HCT116 (cell line): ENCODE measurements at regions of chr9 and their contacts with region 1.

Region 1: GRCh38 chr9:136784249-136784996 is 6.7 kb upstream of the TMEM141 start:
- DNase-seq: peak; percentile 52
- ATAC-seq: peak; percentile 68
- H3K4me3 ChIP-seq: no peak overlapping the region
- H3K27ac ChIP-seq: no peak overlapping the region
- H3K4me1 ChIP-seq: peaks cover 4 to 18% of the 10 kb centered on the region in 2 experiments; a peak in 3 of 4 replicates
- H3K27me3 ChIP-seq: no peaks in the 10 kb centered on the region
- CTCF ChIP-seq: peak in 2 of 3 experiments; percentile 26 to 51; a peak in 3 of 6 replicates
- POLR2A ChIP-seq: no peak
- RAD21 ChIP-seq: no peak

Region 2: GRCh38 chr9:136757751-136758140 is 26.7 kb before region 1 on chr9:
- CTCF ChIA-PET with region 1: interaction called, 3 read pairs
- POLR2A ChIA-PET with region 1: no interaction called
- RAD21 ChIA-PET with region 1: no interaction called
- intact Hi-C with region 1: loop called (anchors 1 kb)
- DNase-seq: no peak
- ATAC-seq: no peak
- H3K4me3 ChIP-seq: no peak overlapping the region
- H3K27ac ChIP-seq: no peak overlapping the region
- H3K4me1 ChIP-seq: peaks cover 10 to 18% of the 10 kb centered on the region in 2 experiments; a peak in 3 of 4 replicates
- H3K27me3 ChIP-seq: no peaks in the 10 kb centered on the region
- CTCF ChIP-seq: no peak
- POLR2A ChIP-seq: no peak
- RAD21 ChIP-seq: no peak